ENCODE measurements at regions of chr1 and their contacts with region 1.

Region 1: DNA sequence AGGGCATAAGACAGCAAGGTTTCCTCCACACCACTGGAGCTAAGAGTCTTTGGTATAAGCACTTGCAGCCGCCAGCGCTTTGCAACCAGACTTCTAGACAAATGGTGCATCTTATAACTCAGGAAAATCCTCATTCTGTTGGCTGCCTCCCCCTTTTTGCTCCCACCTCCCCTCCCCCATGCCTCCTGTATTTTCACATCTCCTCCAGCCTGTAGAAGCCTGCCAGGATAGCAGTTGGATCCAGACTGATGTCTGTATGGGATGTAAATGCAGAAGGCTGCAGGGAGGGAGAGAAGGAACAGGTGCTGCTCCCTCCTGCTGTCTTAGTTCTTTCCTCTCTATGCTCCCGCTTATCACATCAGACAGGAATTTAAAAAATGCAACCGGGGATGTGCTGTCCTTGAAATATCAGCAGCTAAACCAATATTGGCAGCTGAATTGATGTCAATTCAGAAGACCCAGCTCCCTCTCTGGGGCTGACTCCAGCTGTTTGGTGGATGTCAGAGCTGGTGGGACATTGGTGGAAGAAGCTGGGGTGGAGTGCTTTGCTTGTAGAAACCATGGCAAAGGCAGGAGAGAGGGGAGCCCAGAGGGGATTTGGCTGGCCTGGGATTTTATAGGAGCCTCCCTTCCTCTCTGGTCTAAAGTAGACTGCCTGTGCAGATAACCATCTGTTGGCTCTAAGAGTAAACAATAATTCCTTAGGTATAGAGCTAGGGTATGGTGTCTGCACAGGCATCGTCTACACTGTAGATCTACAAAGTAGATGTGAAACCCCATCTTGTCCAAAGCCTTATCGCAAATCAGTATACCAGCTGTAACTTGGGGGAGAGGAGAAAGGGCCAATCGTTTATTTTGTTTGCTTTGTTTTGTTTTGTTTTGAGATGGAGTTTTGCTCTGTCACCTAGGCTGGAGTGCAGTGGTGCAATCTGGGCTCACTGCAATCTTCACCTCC is 53.6 kb downstream of the NFASC start:
- DNase-seq: no peak
- CTCF ChIP-seq: no peak

Region 2: GRCh38 chr1:204941421-204942338 is 17.4 kb after region 1 on chr1:
- CTCF ChIA-PET with region 1: interaction called, 24 read pairs
- POLR2A ChIA-PET with region 1: no interaction called
- DNase-seq: peak; percentile 59
- CTCF ChIP-seq: peak; percentile 88

Region 3: DNA sequence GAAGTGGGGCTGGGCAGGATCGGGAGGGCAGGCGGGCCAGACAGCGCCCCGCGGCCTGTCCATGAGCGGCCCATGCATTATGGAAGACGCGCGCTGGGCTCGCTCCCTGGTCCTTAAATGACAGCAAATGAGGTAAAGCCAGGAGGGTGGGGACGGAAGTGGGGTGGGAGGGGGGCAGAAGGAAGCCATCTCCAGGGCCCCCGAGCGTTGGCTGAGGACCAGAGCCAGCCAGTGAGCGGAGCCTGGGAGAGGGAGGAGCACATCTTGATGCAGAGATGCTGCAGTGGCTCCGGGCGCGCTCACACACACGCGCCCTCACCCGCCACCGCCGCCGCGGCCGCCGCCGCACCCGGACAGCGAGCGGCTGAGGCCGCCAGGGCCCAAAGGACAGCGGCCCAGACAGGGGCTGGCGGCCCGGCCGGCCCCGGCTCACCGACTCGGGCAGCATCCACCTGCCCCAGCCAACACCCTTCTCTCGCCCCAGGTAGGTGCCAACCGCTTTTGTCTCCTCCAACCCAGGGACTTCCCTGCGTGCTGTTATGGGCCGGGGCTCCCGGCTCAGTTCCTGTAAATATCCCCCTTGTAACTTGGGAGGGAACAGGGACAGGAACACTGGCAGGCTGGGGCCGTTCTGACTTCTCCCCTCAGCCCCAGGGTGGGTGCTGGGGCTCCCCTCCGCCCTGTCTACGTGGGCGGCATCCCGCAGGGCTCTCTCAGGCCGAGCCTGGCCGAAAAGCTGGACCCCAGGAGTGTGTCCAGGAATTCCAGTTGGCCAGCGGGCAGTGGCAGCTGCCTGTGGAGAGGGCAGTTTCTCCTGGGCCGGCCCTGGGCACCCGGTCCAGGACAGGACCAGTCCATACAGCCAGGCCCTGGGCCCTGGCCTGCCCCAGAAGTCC is 118.9 kb after region 1 on chr1 and contains the start of gene CNTN2:
- CTCF ChIA-PET with region 1: no interaction called
- POLR2A ChIA-PET with region 1: no interaction called
- DNase-seq: no peak
- CTCF ChIP-seq: no peak